ENCODE measurements at regions of chr1 and their contacts with region 1.

Region 1: DNA sequence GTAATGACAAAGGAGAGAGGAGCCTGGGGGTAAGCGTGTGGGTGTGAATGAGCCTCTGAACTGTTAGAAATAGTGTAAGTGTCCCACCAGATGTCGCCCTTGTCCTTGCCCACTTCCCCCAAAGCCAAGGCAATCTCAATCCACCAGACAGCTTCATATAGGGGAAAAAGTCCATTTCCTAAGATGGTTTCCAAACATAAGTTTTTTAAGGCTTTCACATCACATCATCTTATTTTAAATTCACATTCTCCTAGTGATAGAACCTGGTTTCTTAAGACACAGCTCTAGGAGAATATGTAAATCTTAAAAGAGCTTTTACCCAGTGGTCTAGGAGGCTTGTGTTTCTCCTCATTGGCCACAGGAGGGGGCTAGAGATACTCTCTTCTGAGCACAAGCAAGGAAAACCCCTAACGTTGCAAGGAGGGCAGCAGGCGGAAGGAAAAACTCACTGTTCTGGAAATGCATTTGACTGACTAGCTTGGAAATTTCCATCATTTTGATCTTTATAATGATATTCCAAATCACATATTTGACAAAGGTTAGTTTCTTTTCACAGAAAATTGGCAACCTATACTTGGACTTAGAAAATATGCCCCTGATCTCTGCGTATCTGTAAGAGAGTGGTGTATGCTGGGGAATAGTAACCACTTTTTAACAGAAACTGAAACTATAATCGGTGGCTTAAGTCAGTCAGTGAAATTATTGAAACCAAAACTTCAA is 51.9 kb upstream of the LPAR3 start:
- DNase-seq: peak; percentile 82
- ATAC-seq: peak; percentile 93
- H3K4me3 Mint-ChIP-seq: peak overlapping the region; percentile 80
- H3K27ac Mint-ChIP-seq: peak overlapping the region; percentile 92
- H3K4me1 Mint-ChIP-seq: peaks cover 21% of the 10 kb centered on the region
- H3K27me3 Mint-ChIP-seq: no peaks in the 10 kb centered on the region

Region 2: DNA sequence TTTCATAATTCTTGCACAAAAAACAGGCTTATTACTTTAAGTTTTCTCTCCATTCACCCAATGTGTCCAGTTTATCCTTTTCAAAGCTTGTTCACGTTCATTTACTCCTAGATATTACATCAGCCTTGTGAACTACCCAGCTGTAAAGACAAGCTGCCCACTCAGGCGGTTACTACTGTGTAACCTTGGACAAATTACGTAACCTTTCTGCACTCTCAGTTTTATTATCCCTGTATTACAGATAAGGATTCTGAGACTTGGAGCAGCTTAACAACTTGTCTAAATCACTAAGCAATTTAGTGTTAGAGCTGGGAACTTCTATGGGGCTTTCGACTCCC is 31.4 kb before region 1 on chr1:
- CTCF ChIA-PET with region 1: no interaction called
- DNase-seq: no peak
- ATAC-seq: no peak
- H3K4me3 Mint-ChIP-seq: no peak overlapping the region
- H3K27ac Mint-ChIP-seq: no peak overlapping the region
- H3K4me1 Mint-ChIP-seq: no peaks in the 10 kb centered on the region
- H3K27me3 Mint-ChIP-seq: peaks cover 16% of the 10 kb centered on the region

Region 3: GRCh38 chr1:84973498-84974334 is 28.8 kb after region 1 on chr1:
- CTCF ChIA-PET with region 1: interaction called, 23 read pairs
- DNase-seq: peak; percentile 51
- ATAC-seq: peak; percentile 18
- H3K4me3 Mint-ChIP-seq: no peak overlapping the region
- H3K27ac Mint-ChIP-seq: peak overlapping the region; percentile 97
- H3K4me1 Mint-ChIP-seq: peaks cover 70% of the 10 kb centered on the region
- H3K27me3 Mint-ChIP-seq: no peaks in the 10 kb centered on the region

Region 4: DNA sequence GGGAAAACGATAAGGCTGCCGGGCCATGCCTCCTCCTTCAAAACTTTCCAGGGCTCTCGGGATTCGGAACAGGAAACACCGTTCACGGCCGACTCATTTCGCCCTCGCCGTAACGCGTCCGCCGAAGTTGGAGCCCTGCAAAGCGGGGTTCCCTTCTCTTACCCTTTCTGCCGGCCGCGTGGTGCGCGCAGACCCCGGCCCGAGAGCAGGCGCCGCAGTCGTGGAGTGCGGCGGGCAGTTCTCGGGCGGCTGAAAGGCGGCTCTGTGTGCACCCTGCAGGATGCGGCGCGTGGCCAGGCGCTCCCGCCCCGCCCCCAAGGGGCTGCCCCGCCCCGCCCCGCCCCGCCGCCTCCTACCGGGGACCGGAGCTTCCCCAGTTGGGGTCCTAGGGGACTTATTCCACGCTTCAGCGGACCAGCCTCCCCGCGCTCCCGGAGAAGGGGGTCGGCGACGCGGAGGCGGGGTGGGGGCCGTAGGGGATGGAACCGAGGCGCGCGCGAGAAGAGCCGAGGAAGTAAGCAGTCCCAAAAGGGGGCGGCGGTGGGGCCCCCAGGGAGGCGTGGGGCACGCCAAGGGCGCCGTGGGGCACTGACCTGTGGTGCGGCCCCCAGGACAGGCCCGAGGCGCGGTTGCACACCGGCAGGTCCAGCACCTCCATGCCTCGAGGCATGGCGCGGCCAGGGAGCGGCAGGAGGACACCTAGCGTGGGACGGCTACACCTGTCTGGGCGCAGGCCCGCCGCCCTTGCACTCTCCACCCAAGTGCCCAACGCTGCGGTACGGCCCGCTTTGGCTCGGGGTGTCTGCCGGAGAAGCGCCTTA is 52.1 kb after region 1 on chr1 and contains the start of gene MCOLN2:
- CTCF ChIA-PET with region 1: interaction called, 37 read pairs
- DNase-seq: peak; percentile 72
- ATAC-seq: peak; percentile 73
- H3K4me3 Mint-ChIP-seq: peak within 1 kb of the TSS; percentile 83
- H3K27ac Mint-ChIP-seq: peak within 1 kb of the TSS; percentile 92
- H3K4me1 Mint-ChIP-seq: peaks cover 63% of the 10 kb centered on the region
- H3K27me3 Mint-ChIP-seq: peaks cover 3% of the 10 kb centered on the region
- total RNA-seq, gene MCOLN2: 51.8 to 60.6 TPM

Region 5: DNA sequence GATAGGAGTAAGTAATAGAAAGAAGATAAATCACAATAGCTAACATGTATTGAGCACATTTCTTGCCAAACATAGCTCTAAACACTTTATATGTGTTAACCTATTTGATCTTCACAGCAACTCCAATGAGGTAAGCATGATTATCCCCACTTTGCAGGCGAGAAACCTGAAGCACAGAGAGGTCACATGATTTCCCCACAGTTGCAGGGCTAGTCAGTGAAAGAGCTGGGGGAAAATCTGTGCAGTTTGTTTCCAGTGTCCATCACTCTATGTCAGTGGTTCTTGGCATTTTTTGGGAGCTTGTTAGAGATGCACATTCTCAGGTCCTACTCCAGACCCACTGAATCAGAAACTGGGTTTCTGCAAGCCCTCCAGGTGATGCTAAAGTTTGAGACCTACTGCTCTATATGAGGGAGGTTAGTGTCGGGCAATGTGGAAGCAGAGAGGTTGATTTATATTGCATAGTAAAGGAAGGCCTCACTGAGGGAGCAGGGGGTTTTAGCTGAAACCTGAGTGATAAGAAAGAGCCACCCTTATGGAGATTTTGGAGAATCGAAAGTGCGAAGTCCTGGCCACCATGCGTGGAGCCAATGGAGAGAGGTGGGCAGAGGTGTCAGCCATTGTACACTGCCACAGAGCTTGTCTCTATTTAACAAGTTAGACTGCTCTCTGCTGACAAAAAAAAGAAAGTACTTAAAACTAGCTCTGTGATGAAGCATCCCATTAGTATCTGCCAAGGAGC is 82.5 kb after region 1 on chr1:
- CTCF ChIA-PET with region 1: interaction called, 148 read pairs
- DNase-seq: peak; percentile 54
- ATAC-seq: peak; percentile 90
- H3K4me3 Mint-ChIP-seq: peak overlapping the region; percentile 37
- H3K27ac Mint-ChIP-seq: peak overlapping the region; percentile 47
- H3K4me1 Mint-ChIP-seq: peaks cover 11% of the 10 kb centered on the region
- H3K27me3 Mint-ChIP-seq: no peaks in the 10 kb centered on the region

Region 6: GRCh38 chr1:85240174-85240601 is 295.3 kb after region 1 on chr1:
- CTCF ChIA-PET with region 1: interaction called, 13 read pairs
- DNase-seq: peak; percentile 48
- ATAC-seq: peak; percentile 84
- H3K4me3 Mint-ChIP-seq: no peak overlapping the region
- H3K27ac Mint-ChIP-seq: no peak overlapping the region
- H3K4me1 Mint-ChIP-seq: peaks cover 14% of the 10 kb centered on the region
- H3K27me3 Mint-ChIP-seq: peaks cover 3% of the 10 kb centered on the region

Region 7: GRCh38 chr1:85276215-85276977 is 331.5 kb after region 1 on chr1 and contains the start of gene BCL10:
- CTCF ChIA-PET with region 1: interaction called, 21 read pairs
- DNase-seq: peak; percentile 99
- ATAC-seq: peak; percentile 98
- H3K4me3 Mint-ChIP-seq: peak within 1 kb of the TSS; percentile 85
- H3K27ac Mint-ChIP-seq: peak within 1 kb of the TSS; percentile 88
- H3K4me1 Mint-ChIP-seq: peaks cover 49% of the 10 kb centered on the region
- H3K27me3 Mint-ChIP-seq: peaks cover 27% of the 10 kb centered on the region
- total RNA-seq, gene BCL10: 23.9 to 26.9 TPM

Measured in activated CD8-positive, alpha-beta memory T cell treated with anti-CD3 and anti-CD28 coated beads, Interleukin-2, amount 10 ng/mL, durations not matched to agents 7 days and 5 days (primary cell).